ENCODE measurements at regions of chr10 and their contacts with region 1.

Region 1: GRCh38 chr10:91251430-91252056 is 31.1 kb downstream of the PCGF5 start:
- DNase-seq: peak in 1 of 2 donors; percentile 77
- H3K4me3 ChIP-seq: no peak overlapping the region
- H3K27ac ChIP-seq: no peak overlapping the region
- H3K4me1 ChIP-seq: peaks cover 5 to 17% of the 10 kb centered on the region in 2 donors
- H3K27me3 ChIP-seq: no peaks in the 10 kb centered on the region
- CTCF ChIP-seq: peak; percentile 78 to 91 (median 82)

Region 2: GRCh38 chr10:90912174-90912573 is 339.4 kb before region 1 on chr10:
- intact Hi-C with region 1: loop called (anchors 1 kb)
- DNase-seq: no peak
- H3K4me3 ChIP-seq: no peak overlapping the region
- H3K27ac ChIP-seq: no peak overlapping the region
- H3K4me1 ChIP-seq: peaks cover 0 to 3% of the 10 kb centered on the region in 2 donors
- H3K27me3 ChIP-seq: no peaks in the 10 kb centered on the region
- CTCF ChIP-seq: no peak

Region 3: DNA sequence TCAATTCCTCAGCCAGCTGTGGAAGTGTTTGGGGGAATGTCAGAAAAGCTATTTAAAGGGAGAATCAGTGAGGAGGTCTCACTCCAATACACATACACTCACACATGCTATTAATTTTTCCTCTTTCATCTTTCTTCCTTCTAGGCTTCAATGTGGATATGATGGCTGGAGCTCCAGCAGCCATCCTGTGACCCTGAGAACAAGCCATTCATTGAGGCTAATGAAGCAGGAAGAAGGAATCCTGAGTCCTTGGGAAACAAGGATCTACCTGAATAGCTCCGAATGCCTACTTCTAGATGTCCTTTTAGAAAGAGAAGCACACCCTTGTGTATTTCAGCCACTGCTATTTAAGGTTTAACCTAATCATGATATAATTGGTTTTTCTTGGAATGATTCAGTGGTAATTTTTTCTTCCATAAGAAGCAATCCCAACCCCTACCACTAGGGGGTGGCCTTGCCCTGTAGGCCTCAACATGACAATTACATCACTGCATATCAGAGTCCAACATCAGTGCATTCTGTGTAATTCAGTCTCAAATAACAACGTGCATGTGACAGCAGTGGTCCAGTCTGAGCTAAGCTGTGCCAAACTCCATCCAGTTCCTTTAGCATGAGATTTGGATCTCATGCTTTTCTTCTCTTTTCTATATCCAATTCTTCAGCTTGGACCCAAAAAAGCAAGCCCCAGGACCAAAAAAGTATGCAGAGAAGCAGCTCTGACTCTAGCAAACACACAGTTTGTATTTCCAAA is 245.4 kb before region 1 on chr10:
- intact Hi-C with region 1: loop called (anchors 1 kb)
- DNase-seq: peak in 1 of 2 donors; percentile 85
- H3K4me3 ChIP-seq: no peak overlapping the region
- H3K27ac ChIP-seq: peak overlapping the region; percentile 48 to 70
- H3K4me1 ChIP-seq: peaks cover 0 to 5% of the 10 kb centered on the region in 2 donors
- H3K27me3 ChIP-seq: no peaks in the 10 kb centered on the region
- CTCF ChIP-seq: peak; percentile 87 to 88 (median 88)

Region 4: GRCh38 chr10:91043173-91043910 is 208.2 kb before region 1 on chr10:
- intact Hi-C with region 1: loop called (anchors 1 kb)
- DNase-seq: no peak
- H3K4me3 ChIP-seq: no peak overlapping the region
- H3K27ac ChIP-seq: no peak overlapping the region
- H3K4me1 ChIP-seq: peaks cover 0 to 5% of the 10 kb centered on the region in 2 donors
- H3K27me3 ChIP-seq: no peaks in the 10 kb centered on the region
- CTCF ChIP-seq: peak in 2 of 3 experiments; percentile 38 to 62

Region 5: DNA sequence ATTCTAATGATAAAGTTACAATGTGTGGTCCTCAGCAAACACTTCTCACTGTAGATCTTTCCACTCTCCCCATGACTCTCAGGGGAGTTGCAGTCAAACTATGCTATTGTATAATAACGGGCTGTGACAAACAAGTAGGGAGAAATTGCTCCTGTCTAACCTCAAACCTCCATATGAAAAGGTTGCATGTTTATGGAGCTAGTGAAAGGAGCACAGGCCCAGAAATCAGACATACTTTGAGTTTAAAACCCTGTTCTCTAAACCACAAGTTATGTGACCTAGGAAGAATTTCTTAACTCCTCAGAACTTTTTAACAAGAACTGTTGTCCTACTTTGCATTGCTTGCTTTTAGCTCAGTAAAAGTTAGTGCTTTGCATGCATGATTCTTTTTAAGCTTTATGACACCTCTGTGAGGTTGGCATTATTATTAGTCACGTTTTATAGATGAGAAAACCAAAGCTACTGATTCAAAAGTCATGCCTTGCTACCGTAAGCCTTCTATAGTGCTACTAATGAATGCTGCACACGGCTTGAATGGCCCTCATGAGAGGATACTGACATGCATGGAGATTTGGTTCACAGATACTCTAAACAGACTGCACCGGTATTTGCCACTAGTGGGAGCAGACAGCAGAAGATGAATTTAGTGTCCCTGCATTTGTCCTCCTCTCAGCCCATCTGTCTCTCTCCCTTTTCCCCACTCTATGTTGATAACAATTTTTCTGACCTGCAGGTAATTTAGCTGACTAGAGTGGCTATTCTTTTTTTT is 160.6 kb before region 1 on chr10:
- intact Hi-C with region 1: loop called (anchors 5 kb)
- DNase-seq: peak in 1 of 2 donors; percentile 9
- H3K4me3 ChIP-seq: no peak overlapping the region
- H3K27ac ChIP-seq: peak overlapping the region; percentile 72 to 73
- H3K4me1 ChIP-seq: peaks cover 6 to 25% of the 10 kb centered on the region in 2 donors
- H3K27me3 ChIP-seq: no peaks in the 10 kb centered on the region
- CTCF ChIP-seq: no peak

Region 6: DNA sequence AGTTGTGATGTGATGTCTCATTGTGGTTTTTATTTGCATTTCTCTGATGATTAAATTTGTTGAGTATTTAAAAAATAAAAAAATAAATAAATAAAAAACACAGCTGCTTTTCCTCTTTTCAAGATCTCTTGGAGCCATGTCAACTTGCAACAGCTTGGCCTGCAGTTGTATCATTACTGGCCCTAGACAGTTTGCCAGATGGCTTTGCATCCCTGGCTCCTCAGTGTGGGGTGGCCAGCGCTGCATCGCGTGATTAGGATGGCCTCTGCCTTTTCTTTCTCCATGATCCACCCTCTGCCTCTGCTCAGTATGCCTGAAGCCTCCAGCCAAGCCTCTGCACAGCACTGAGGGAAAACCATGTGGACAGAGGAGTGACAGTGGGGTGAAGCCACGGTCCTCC is 284.6 kb after region 1 on chr10:
- intact Hi-C with region 1: no loop called
- DNase-seq: no peak
- H3K4me3 ChIP-seq: no peak overlapping the region
- H3K27ac ChIP-seq: no peak overlapping the region
- H3K4me1 ChIP-seq: no peaks in the 10 kb centered on the region
- H3K27me3 ChIP-seq: no peaks in the 10 kb centered on the region
- CTCF ChIP-seq: no peak

Measured in ascending aorta (tissue), 2 donors.